PC-9 (cell line): ENCODE measurements at regions of chr3 and their contacts with region 1.

Region 1: DNA sequence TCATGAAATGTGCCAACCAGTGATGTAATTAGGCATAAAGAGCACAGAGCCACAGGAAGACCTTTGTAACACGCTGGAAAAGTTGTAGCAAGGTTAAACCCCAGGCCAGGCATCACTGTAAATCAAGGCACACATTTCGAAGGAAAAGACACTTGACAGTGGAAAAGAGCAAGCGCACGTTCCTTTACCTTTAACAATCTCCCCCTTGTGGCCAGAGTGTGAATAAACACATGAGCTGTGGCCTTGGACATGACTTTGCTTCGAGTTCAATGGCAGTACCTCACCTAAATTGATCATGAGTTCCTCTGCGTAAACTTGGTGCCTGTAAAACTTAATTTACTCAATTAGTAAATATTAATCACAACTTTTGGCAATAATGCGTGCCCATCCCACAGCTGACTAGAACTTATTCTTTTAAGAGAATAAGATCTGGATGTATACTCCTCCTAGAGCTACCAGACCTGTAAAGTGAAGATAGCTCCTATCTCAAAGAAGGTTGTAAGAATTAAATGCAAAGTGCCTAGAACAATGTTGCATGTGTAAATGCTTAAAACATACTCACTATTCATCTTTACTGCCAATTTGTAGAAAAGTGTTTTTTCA is 757.0 kb upstream of the NECTIN3 start:
- DNase-seq: peak in 1 of 2 experiments; percentile 43
- H3K4me3 ChIP-seq: no peak overlapping the region
- H3K27ac ChIP-seq: no peak overlapping the region
- H3K4me1 ChIP-seq: no peaks in the 10 kb centered on the region
- H3K27me3 ChIP-seq: no peaks in the 10 kb centered on the region
- CTCF ChIP-seq: peak; percentile 97

Region 2: GRCh38 chr3:109731620-109732473 is 582.8 kb before region 1 on chr3:
- CTCF ChIA-PET with region 1: no interaction called
- POLR2A ChIA-PET with region 1: no interaction called
- intact Hi-C with region 1: loop called (anchors 10 kb)
- DNase-seq: peak in 1 of 2 experiments; percentile 32
- H3K4me3 ChIP-seq: no peak overlapping the region
- H3K27ac ChIP-seq: no peak overlapping the region
- H3K4me1 ChIP-seq: no peaks in the 10 kb centered on the region
- H3K27me3 ChIP-seq: no peaks in the 10 kb centered on the region
- CTCF ChIP-seq: peak; percentile 100